CD8-positive, alpha-beta T cell (primary cell): ENCODE measurements at regions of chr5 and their contacts with region 1.

Region 1: DNA sequence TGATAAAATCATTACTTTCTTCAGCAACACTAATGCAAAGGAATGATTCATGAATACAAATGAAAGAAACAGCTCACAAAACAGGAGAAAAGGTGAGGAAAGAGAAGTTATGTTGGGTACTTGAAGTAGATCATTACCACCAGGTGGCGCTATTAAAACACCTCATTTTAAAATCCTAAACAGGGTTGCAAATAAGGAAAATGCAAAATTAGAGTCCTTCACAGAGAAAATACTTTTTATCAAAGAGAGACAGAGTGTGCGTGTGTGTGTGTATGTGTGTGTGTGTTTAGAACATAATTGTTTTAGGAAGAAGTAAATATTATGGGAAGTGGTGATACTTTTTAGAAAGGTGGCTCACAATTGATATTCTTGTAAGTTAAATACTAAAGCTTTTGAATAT is 49.5 kb upstream of the CD180 start:
- DNase-seq: peak in 3 of 9 experiments; percentile 39 to 80 (median 74)
- ATAC-seq: no peak
- H3K4me3 ChIP-seq: no peak overlapping the region
- H3K4me3 Mint-ChIP-seq: no peak overlapping the region
- H3K27ac ChIP-seq: no peak overlapping the region
- H3K27ac Mint-ChIP-seq: no peak overlapping the region
- H3K4me1 ChIP-seq: peaks cover 9% of the 10 kb centered on the region
- H3K4me1 Mint-ChIP-seq: peaks cover 11% of the 10 kb centered on the region
- H3K27me3 ChIP-seq: no peaks in the 10 kb centered on the region
- H3K27me3 Mint-ChIP-seq: no peaks in the 10 kb centered on the region
- CTCF ChIP-seq: peak; percentile 95

Region 2: GRCh38 chr5:67215583-67216471 is 30.3 kb before region 1 on chr5:
- CTCF ChIA-PET with region 1: interaction called, 26 read pairs
- POLR2A ChIA-PET with region 1: no interaction called
- intact Hi-C with region 1: no loop called
- DNase-seq: peak; percentile 51 to 88 (median 74)
- ATAC-seq: peak; percentile 97
- H3K4me3 ChIP-seq: peak overlapping the region; percentile 19 to 39
- H3K4me3 Mint-ChIP-seq: peak overlapping the region; percentile 72
- H3K27ac ChIP-seq: peak overlapping the region; percentile 60 to 61
- H3K27ac Mint-ChIP-seq: peak overlapping the region; percentile 99
- H3K4me1 ChIP-seq: peaks cover 45% of the 10 kb centered on the region
- H3K4me1 Mint-ChIP-seq: peaks cover 60% of the 10 kb centered on the region
- H3K27me3 ChIP-seq: no peaks in the 10 kb centered on the region
- H3K27me3 Mint-ChIP-seq: no peaks in the 10 kb centered on the region
- CTCF ChIP-seq: no peak

Region 3: GRCh38 chr5:67234257-67234656 is 11.9 kb before region 1 on chr5:
- CTCF ChIA-PET with region 1: interaction called, 14 read pairs
- POLR2A ChIA-PET with region 1: no interaction called
- intact Hi-C with region 1: no loop called
- DNase-seq: no peak
- ATAC-seq: no peak
- H3K4me3 ChIP-seq: no peak overlapping the region
- H3K4me3 Mint-ChIP-seq: no peak overlapping the region
- H3K27ac ChIP-seq: no peak overlapping the region
- H3K27ac Mint-ChIP-seq: no peak overlapping the region
- H3K4me1 ChIP-seq: no peaks in the 10 kb centered on the region
- H3K4me1 Mint-ChIP-seq: peaks cover 5% of the 10 kb centered on the region
- H3K27me3 ChIP-seq: no peaks in the 10 kb centered on the region
- H3K27me3 Mint-ChIP-seq: no peaks in the 10 kb centered on the region
- CTCF ChIP-seq: no peak

Region 4: GRCh38 chr5:68279984-68280383 is 1033.9 kb after region 1 on chr5:
- CTCF ChIA-PET with region 1: interaction called, 10 read pairs
- POLR2A ChIA-PET with region 1: no interaction called
- intact Hi-C with region 1: loop called in 1 of 2 experiments (anchors 5 kb)
- DNase-seq: peak in 6 of 9 experiments; percentile 30 to 91 (median 56)
- ATAC-seq: peak; percentile 89
- H3K4me3 ChIP-seq: peak overlapping the region; percentile 56
- H3K4me3 Mint-ChIP-seq: peak overlapping the region; percentile 86
- H3K27ac ChIP-seq: peak overlapping the region; percentile 68 to 74
- H3K27ac Mint-ChIP-seq: peak overlapping the region; percentile 95
- H3K4me1 ChIP-seq: peaks cover 59% of the 10 kb centered on the region
- H3K4me1 Mint-ChIP-seq: peaks cover 84% of the 10 kb centered on the region
- H3K27me3 ChIP-seq: no peaks in the 10 kb centered on the region
- H3K27me3 Mint-ChIP-seq: no peaks in the 10 kb centered on the region
- CTCF ChIP-seq: no peak

Region 5: DNA sequence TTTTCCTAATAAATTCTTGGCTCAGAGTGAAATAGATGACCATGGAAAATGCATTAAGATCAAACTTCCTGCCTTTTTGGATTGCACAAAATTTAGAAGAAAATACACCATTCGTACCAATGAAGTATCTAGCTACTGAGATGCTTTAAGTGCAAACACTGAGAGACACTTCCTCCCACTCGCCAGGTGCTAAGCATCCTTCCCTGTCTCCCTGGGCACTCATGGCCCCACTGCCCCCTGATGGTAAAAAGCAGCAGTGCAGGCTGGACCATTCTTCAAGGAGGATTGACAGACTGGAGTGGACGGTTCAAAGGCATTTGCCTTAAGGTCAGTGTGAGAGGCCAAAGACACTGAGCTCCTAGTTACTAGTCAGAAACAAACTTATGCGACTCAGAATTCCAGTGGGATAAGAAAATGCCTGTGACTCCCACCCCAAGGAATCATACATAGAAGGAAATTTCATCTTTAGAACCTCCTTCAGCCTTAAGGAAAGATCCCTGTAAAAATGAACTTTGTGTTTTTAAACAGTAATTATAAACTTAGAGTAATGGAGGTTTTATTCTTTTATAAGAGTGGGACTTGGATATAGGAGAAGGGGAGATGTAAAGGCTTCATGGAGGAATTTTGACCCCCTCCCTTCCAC is 1761.7 kb after region 1 on chr5:
- CTCF ChIA-PET with region 1: interaction called, 3 read pairs
- POLR2A ChIA-PET with region 1: no interaction called
- intact Hi-C with region 1: loop called in 1 of 2 experiments (anchors 1 kb)
- DNase-seq: peak; percentile 44 to 83 (median 69)
- ATAC-seq: peak; percentile 94
- H3K4me3 ChIP-seq: no peak overlapping the region
- H3K4me3 Mint-ChIP-seq: no peak overlapping the region
- H3K27ac ChIP-seq: no peak overlapping the region
- H3K27ac Mint-ChIP-seq: no peak overlapping the region
- H3K4me1 ChIP-seq: no peaks in the 10 kb centered on the region
- H3K4me1 Mint-ChIP-seq: no peaks in the 10 kb centered on the region
- H3K27me3 ChIP-seq: no peaks in the 10 kb centered on the region
- H3K27me3 Mint-ChIP-seq: peaks cover 4% of the 10 kb centered on the region
- CTCF ChIP-seq: peak; percentile 82